MCF 10A (cell line): ENCODE measurements at regions of chr5 and their contacts with region 1.

Region 1: DNA sequence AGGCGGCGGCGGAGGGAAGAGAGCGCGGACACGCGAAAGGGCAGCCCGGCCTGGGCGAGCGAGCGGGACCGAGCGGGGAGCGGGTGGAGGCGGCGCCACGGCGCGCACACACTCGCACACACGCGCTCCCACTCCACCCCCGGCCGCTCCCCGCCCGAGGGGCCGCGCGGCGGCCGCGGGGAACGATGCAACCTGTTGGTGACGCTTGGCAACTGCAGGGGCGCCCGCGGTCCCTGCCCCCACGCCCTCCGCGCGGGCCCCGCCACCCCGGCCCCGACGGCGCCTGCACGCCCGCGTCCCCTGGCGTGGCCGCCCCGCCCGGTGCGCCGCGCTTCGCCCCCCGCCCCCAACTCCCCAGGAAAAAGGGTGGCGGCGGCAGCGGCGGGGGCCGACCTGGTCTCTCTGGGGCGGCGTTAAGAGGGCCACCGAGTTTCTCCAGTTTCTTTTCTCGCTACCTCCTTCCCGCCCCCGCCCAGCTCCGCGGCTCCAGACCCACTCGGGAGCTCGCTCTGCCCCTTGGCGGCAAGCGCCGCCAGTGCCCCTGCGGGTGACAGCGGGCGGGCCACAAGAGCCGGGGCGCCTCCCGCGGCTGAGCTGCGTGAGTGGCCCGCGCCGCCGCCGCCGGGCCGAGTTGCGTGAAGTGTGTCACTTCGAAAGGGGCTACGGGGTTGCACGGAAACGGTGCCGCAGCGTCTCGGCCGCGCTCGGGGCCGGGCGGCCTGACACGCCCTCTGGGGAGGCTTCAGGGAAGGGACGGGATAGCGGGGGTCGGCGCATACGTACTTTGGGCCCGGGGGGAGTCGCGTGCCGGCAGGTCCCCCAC is at the start of gene NR3C1:
- DNase-seq: peak; percentile 86
- H3K4me3 Mint-ChIP-seq: peak within 1 kb of the TSS; percentile 98
- H3K27ac Mint-ChIP-seq: peak within 1 kb of the TSS; percentile 99
- H3K4me1 Mint-ChIP-seq: peaks cover 29% of the 10 kb centered on the region
- H3K27me3 Mint-ChIP-seq: no peaks in the 10 kb centered on the region
- CTCF ChIP-seq: peak; percentile 59
- total RNA-seq, gene NR3C1: 92.9 and 113 TPM in 2 replicates

Region 2: GRCh38 chr5:143061161-143061945 is 342.5 kb before region 1 on chr5:
- CTCF ChIA-PET with region 1: no interaction called
- POLR2A ChIA-PET with region 1: interaction called, 14 read pairs
- intact Hi-C with region 1: no loop called
- DNase-seq: peak; percentile 69
- H3K4me3 Mint-ChIP-seq: peak overlapping the region; percentile 6
- H3K27ac Mint-ChIP-seq: peak overlapping the region; percentile 81
- H3K4me1 Mint-ChIP-seq: peaks cover 49% of the 10 kb centered on the region
- H3K27me3 Mint-ChIP-seq: no peaks in the 10 kb centered on the region
- CTCF ChIP-seq: no peak

Region 3: GRCh38 chr5:143177263-143177983 is 226.4 kb before region 1 on chr5:
- CTCF ChIA-PET with region 1: interaction called, 4 read pairs
- POLR2A ChIA-PET with region 1: interaction called, 12 read pairs
- intact Hi-C with region 1: loop called (anchors 1 kb)
- DNase-seq: peak; percentile 99
- H3K4me3 Mint-ChIP-seq: no peak overlapping the region
- H3K27ac Mint-ChIP-seq: peak overlapping the region; percentile 86
- H3K4me1 Mint-ChIP-seq: peaks cover 16% of the 10 kb centered on the region
- H3K27me3 Mint-ChIP-seq: no peaks in the 10 kb centered on the region
- CTCF ChIP-seq: no peak

Region 4: DNA sequence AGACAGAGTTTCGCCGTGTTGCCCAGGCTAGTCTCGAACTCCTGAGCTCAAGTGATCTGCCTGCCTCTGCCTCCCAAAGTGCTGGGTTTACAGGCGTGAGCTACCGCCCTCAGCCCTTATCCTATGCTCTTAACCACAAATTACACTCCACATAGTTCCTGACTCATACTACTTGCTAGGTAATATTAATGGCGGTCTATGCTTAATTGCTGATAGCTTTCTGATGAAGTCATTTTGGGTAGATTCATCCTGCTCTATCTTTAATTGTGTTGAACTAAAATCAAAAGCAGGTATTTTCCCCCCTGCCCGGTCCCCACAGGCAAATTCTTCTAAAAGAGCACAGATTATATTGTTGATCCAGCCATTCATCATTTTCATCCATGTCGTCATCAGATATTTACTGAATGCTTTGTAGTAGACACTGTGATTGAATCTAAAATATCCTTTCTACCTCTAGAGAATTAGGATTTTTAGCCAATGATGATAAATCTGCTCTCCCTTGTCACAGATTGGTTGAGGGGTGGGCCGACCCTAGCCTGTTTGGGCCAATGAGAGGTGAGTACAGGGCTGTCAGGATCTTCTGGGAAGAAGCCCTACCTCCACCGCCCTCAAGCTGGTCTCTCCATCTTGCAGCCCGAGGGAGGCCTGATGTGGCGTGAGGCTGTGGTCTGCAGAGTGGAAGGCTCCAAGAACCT is 145.1 kb before region 1 on chr5:
- CTCF ChIA-PET with region 1: no interaction called
- POLR2A ChIA-PET with region 1: no interaction called
- intact Hi-C with region 1: no loop called
- DNase-seq: no peak
- H3K4me3 Mint-ChIP-seq: no peak overlapping the region
- H3K27ac Mint-ChIP-seq: no peak overlapping the region
- H3K4me1 Mint-ChIP-seq: peaks cover 33% of the 10 kb centered on the region
- H3K27me3 Mint-ChIP-seq: no peaks in the 10 kb centered on the region
- CTCF ChIP-seq: no peak

Region 5: GRCh38 chr5:143338658-143339366 is 65.0 kb before region 1 on chr5:
- CTCF ChIA-PET with region 1: interaction called, 3 read pairs
- POLR2A ChIA-PET with region 1: interaction called, 13 read pairs
- intact Hi-C with region 1: no loop called
- DNase-seq: peak; percentile 68
- H3K4me3 Mint-ChIP-seq: no peak overlapping the region
- H3K27ac Mint-ChIP-seq: peak overlapping the region; percentile 86
- H3K4me1 Mint-ChIP-seq: peaks cover 39% of the 10 kb centered on the region
- H3K27me3 Mint-ChIP-seq: no peaks in the 10 kb centered on the region
- CTCF ChIP-seq: no peak

Region 6: DNA sequence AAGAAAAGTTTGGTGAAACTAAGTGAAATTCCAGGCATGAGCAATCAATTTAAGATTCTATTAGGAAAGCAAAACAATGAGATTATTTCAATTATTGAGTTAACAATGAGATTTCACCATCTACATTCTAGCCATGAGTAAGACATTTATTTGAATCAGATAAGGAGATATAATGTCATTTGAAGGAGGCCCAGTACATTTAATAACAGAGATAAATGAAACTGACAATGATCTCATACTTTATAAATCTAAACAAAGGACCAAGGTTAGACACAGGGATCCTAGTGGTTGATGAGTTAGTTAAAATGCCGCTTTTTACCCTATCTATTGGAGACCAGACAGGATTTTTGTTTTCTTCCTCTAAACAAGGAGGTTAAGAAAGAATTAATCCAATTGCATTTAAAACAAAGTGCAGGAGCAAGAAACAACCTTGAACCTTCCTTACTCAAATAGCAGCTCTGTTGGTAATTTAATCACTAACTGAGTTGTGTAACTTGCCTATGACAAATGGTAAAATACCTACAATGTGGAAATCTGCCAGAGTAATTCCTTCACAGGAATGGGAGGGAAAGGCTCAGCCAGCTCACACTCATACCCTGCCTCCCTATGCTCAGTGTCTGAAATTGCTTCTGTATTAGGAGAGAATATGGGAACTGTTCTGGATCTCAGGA is 103.2 kb after region 1 on chr5:
- CTCF ChIA-PET with region 1: interaction called, 34 read pairs
- POLR2A ChIA-PET with region 1: interaction called, 74 read pairs
- intact Hi-C with region 1: loop called (anchors 1 kb)
- DNase-seq: peak; percentile 98
- H3K4me3 Mint-ChIP-seq: peak overlapping the region; percentile 44
- H3K27ac Mint-ChIP-seq: peak overlapping the region; percentile 84
- H3K4me1 Mint-ChIP-seq: peaks cover 41% of the 10 kb centered on the region
- H3K27me3 Mint-ChIP-seq: no peaks in the 10 kb centered on the region
- CTCF ChIP-seq: peak; percentile 16

Region 7: GRCh38 chr5:144142139-144142823 is 738.5 kb after region 1 on chr5:
- CTCF ChIA-PET with region 1: interaction called, 4 read pairs
- POLR2A ChIA-PET with region 1: interaction called, 6 read pairs
- intact Hi-C with region 1: loop called (anchors 2 kb)
- DNase-seq: peak; percentile 70
- H3K4me3 Mint-ChIP-seq: no peak overlapping the region
- H3K27ac Mint-ChIP-seq: no peak overlapping the region
- H3K4me1 Mint-ChIP-seq: peaks cover 15% of the 10 kb centered on the region
- H3K27me3 Mint-ChIP-seq: no peaks in the 10 kb centered on the region
- CTCF ChIP-seq: peak; percentile 89